IMR-90 (cell line): ENCODE measurements at regions of chr2 and their contacts with region 1.

Region 1: GRCh38 chr2:15626967-15627366 is 35.3 kb downstream of the DDX1 start:
- DNase-seq: no peak
- ATAC-seq: no peak
- H3K4me3 ChIP-seq: no peak overlapping the region
- H3K27ac ChIP-seq: no peak overlapping the region
- H3K4me1 ChIP-seq: no peaks in the 10 kb centered on the region
- H3K27me3 ChIP-seq: no peaks in the 10 kb centered on the region
- CTCF ChIP-seq: no peak
- POLR2A ChIP-seq: no peak
- RAD21 ChIP-seq: no peak

Region 2: DNA sequence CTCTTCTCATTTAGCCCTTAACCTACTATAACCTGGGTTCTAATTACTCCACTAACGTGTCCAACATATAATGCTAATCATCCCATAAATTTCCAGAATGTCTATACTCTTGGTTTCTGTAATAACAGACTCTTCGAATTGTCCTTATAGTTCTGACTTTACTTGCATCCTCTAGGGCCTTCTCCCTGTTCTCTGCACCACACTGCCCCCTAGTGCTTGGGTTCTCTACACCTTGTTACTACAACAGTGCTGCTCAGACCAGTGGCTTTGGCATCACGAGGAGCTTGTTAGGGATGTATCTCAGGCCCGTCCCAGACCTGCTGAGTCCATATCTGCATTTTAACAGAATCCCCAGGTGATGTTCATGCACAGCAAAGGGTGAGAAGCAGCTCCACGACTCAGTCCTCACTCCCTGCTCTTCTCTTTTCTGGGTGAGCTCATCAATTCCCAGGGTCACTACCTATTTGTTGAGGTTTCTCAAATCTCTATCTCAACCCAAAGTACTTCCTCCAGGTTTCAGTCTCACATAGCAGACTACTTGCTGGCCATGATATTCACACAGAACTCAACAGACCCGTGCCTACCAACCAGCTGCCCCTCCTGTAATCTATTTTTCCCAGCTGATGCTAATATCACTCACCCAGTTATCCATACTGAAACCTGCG is 49.8 kb before region 1 on chr2:
- CTCF ChIA-PET with region 1: no interaction called
- POLR2A ChIA-PET with region 1: no interaction called
- dilution Hi-C with region 1: no loop called
- in situ Hi-C with region 1: no loop called
- intact Hi-C with region 1: no loop called
- DNase-seq: peak; percentile 78
- ATAC-seq: peak; percentile 98
- H3K4me3 ChIP-seq: no peak overlapping the region
- H3K27ac ChIP-seq: no peak overlapping the region
- H3K4me1 ChIP-seq: no peaks in the 10 kb centered on the region
- H3K27me3 ChIP-seq: no peaks in the 10 kb centered on the region
- CTCF ChIP-seq: peak; percentile 84
- POLR2A ChIP-seq: no peak
- RAD21 ChIP-seq: peak; percentile 91

Region 3: DNA sequence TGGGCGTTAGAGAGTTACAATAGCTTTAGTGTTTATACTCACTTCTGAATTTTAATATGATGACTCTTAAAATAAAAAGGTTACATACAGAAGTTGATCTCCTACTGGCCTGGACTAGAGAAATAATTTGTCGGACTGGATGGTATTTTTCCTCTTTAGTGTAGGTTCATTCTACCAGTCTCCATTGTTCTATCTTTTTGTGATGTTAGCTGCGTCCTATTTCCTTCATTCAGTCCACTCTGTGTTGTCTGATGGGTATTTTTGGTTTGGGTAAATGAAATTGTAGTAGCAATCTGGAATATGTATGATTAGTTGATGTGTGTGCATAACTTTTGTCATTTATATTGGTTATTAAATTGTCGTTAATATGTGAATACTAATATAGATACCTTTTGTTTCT is 30.0 kb before region 1 on chr2:
- CTCF ChIA-PET with region 1: no interaction called
- POLR2A ChIA-PET with region 1: no interaction called
- dilution Hi-C with region 1: no loop called
- in situ Hi-C with region 1: no loop called
- intact Hi-C with region 1: loop called (anchors 2 kb)
- DNase-seq: no peak
- ATAC-seq: no peak
- H3K4me3 ChIP-seq: no peak overlapping the region
- H3K27ac ChIP-seq: no peak overlapping the region
- H3K4me1 ChIP-seq: no peaks in the 10 kb centered on the region
- H3K27me3 ChIP-seq: no peaks in the 10 kb centered on the region
- CTCF ChIP-seq: no peak
- POLR2A ChIP-seq: no peak
- RAD21 ChIP-seq: no peak